K562 (cell line): ENCODE measurements at regions of chr6 and their contacts with region 1.

Region 1: DNA sequence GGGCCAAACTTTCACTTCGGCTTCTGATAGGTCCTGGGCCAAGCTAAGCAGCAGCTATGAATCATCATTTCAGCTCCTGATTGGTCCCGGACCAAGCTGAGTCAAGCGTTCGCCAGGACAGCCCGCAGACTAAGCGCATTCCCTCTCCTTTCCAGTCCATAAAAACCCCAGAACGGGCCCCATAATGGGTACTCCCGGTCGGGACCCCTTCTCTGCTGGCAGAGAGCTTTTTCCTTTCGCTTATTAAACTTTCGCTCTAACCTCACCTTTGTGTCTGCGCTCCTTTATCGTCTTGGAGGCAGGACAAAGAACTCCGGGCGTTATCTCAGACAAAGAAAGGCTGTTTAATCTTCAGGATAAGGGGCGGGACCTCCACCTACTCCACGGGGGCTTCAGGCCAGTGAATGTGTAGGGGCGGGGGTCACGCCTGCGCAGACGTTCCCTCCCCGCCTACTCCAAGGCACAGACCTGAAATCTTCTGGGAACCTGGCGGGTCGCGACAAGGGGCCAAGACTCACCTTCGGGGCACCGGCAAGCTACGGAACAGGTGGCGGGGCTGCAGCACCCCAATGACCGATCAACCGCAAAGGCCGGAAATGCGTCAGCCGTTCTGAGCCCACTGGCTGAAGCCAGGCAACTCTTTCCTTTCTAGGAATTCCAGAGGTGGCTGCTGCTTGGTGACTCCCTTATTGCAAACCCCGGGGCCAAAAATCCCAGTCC is at the start of gene ZSCAN31:
- DNase-seq: peak; percentile 97 to 99 (median 97)
- ATAC-seq: peak; percentile 91
- H3K4me3 ChIP-seq: peak within 1 kb of the TSS; percentile 69
- H3K27ac ChIP-seq: peak within 1 kb of the TSS; percentile 98
- H3K4me1 ChIP-seq: peaks cover 23 to 43% of the 10 kb centered on the region in 2 experiments
- H3K27me3 ChIP-seq: no peaks in the 10 kb centered on the region
- CTCF ChIP-seq: no peak
- EP300 ChIP-seq: peak; percentile 8; the same call in 1 of the 2 replicates
- POLR2A ChIP-seq: peak; percentile 99
- RAD21 ChIP-seq: peak in 1 of 2 experiments; percentile 17; a peak in 1 of 4 replicates
- polyA plus RNA-seq, gene ZSCAN31: 5.0 to 7.0 TPM

Region 2: GRCh38 chr6:28136585-28137504 is 198.9 kb before region 1 on chr6:
- CTCF ChIA-PET with region 1: no interaction called
- POLR2A ChIA-PET with region 1: interaction called, 34 read pairs
- in situ Hi-C with region 1: no loop called
- intact Hi-C with region 1: loop called (anchors 5 kb)
- DNase-seq: peak; percentile 84 to 99 (median 88)
- ATAC-seq: peak; percentile 80
- H3K4me3 ChIP-seq: peak overlapping the region; percentile 72
- H3K27ac ChIP-seq: peak overlapping the region; percentile 96
- H3K4me1 ChIP-seq: peaks cover 12 to 20% of the 10 kb centered on the region in 2 experiments; a peak in 4 of 5 replicates
- H3K27me3 ChIP-seq: no peaks in the 10 kb centered on the region
- CTCF ChIP-seq: no peak
- EP300 ChIP-seq: peak; percentile 91
- POLR2A ChIP-seq: peak; percentile 93
- RAD21 ChIP-seq: peak; percentile 38 to 48; a peak in 3 of 4 replicates

Region 3: GRCh38 chr6:28218271-28219248 is 117.2 kb before region 1 on chr6:
- CTCF ChIA-PET with region 1: no interaction called
- POLR2A ChIA-PET with region 1: interaction called, 38 read pairs
- in situ Hi-C with region 1: no loop called
- intact Hi-C with region 1: loop called (anchors 5 kb)
- DNase-seq: peak; percentile 89 to 95 (median 92)
- ATAC-seq: peak; percentile 84
- H3K4me3 ChIP-seq: peak overlapping the region; percentile 62
- H3K27ac ChIP-seq: peak overlapping the region; percentile 81
- H3K4me1 ChIP-seq: peaks cover 33 to 44% of the 10 kb centered on the region in 2 experiments
- H3K27me3 ChIP-seq: no peaks in the 10 kb centered on the region
- CTCF ChIP-seq: peak in 2 of 3 experiments; percentile 13 to 32; a peak in 1 of 6 replicates
- EP300 ChIP-seq: peak; percentile 36; the same call in 1 of the 2 replicates
- POLR2A ChIP-seq: peak; percentile 82
- RAD21 ChIP-seq: no peak; a peak in 1 of 4 replicates

Region 4: DNA sequence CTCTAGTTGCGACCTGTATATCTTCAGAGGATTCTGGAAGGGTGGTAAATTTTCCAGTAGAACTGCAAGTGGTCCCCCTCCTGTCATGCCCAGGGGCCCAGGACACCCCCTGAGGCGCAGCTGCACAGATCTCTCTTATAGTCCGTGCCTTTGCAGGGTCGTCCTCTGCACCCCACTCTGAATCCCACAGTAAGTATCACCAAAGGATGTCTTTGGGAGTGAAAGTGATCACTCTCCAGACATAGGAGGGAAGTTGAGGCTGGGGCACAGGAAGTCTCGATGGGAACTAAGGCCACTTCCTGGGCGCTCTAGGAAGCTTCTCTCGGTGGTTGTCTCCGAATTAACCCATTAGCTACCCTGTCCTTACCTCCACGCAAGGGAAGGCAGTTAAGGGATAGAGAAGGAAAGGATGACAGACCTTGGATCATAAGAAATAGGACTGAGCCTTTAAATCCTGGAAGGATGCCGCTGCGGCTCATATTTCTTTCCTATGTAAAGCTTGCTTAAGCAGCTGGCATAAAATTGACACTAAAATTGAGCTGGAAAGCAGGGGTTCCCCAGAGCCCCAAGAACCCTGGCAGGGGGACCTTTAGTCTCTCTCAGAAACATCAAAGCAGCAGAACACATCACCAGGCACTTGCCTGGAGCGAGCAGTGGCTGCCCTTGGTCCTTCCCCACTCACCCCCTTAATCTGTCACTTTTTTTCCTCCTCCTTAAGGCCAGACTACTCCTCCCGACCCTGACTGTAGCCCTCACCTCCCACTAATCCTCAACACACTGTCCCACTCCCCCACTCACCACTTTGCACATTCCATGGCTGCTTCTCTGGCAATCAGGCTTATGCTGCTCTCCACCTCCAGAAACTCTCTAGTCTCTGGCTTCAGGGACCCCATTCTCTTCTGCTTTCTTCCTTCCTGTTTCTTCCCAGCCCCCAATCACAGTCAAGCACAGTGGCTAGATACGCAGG is 83.4 kb before region 1 on chr6 and contains the start of gene ZKSCAN4:
- CTCF ChIA-PET with region 1: no interaction called
- POLR2A ChIA-PET with region 1: interaction called, 16 read pairs
- in situ Hi-C with region 1: no loop called
- intact Hi-C with region 1: no loop called
- DNase-seq: peak; percentile 82 to 96 (median 88)
- ATAC-seq: peak; percentile 94
- H3K4me3 ChIP-seq: peak within 1 kb of the TSS; percentile 73
- H3K27ac ChIP-seq: peak within 1 kb of the TSS; percentile 60
- H3K4me1 ChIP-seq: peaks cover 10 to 24% of the 10 kb centered on the region in 2 experiments
- H3K27me3 ChIP-seq: no peaks in the 10 kb centered on the region
- CTCF ChIP-seq: no peak
- EP300 ChIP-seq: peak; percentile 62
- POLR2A ChIP-seq: peak; percentile 75
- RAD21 ChIP-seq: peak; percentile 35 to 38
- polyA plus RNA-seq, gene ZKSCAN4: 1.2 to 1.6 TPM

Region 5: DNA sequence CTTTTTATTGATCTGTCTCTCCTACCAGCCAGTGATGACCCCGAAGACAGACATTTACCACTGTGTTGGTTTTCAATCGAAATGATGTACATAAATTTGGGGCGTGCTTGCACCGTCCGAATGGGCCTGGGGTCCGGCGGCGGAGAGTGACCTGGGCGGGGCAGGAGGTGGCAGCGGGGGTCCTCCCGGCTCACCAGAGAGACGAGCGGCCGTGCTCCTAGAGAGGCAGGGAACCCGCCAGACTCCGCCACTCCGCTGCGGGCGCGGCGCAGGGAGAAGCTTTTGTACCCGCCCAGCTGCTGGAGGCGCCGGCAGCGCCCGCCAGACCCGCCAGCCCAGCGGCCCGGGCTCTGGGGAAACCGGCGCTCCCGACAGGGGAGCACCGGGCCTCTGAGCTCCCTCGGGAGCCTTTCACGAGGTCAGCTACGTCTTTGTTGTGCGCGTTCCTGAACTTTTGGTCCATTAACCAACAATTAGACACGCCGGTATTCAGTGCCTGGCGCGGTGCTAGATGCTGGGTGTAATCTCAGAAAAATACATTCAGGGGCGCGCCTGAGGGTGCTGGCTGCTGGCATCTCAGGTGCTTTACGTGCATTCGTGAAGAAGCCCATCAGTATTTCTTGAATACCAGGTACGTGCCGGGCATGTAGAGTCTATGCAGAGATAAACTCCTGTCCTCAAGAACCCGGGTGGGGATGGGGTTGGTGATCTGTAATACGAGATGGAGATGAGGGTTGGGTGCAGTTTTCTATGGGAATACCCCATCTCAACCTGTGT is 54.2 kb before region 1 on chr6 and contains the start of gene PGBD1:
- CTCF ChIA-PET with region 1: no interaction called
- POLR2A ChIA-PET with region 1: interaction called, 6 read pairs
- in situ Hi-C with region 1: no loop called
- intact Hi-C with region 1: loop called (anchors 5 kb)
- DNase-seq: peak; percentile 76 to 92 (median 86)
- ATAC-seq: peak; percentile 97
- H3K4me3 ChIP-seq: peak within 1 kb of the TSS; percentile 73
- H3K27ac ChIP-seq: peak within 1 kb of the TSS; percentile 48
- H3K4me1 ChIP-seq: peaks cover 4 to 7% of the 10 kb centered on the region in 2 experiments; a peak in 2 of 5 replicates
- H3K27me3 ChIP-seq: no peaks in the 10 kb centered on the region
- CTCF ChIP-seq: no peak; a peak in 1 of 6 replicates
- EP300 ChIP-seq: no peak
- POLR2A ChIP-seq: peak; percentile 82
- RAD21 ChIP-seq: peak; percentile 28 to 35
- polyA plus RNA-seq, gene PGBD1: 3.3 to 3.5 TPM

Region 6: GRCh38 chr6:28322661-28323060 is 13.1 kb before region 1 on chr6:
- CTCF ChIA-PET with region 1: no interaction called
- POLR2A ChIA-PET with region 1: interaction called, 53 read pairs
- in situ Hi-C with region 1: no loop called
- intact Hi-C with region 1: no loop called
- DNase-seq: no peak
- ATAC-seq: no peak
- H3K4me3 ChIP-seq: no peak overlapping the region
- H3K27ac ChIP-seq: no peak overlapping the region
- H3K4me1 ChIP-seq: no peaks in the 10 kb centered on the region
- H3K27me3 ChIP-seq: no peaks in the 10 kb centered on the region
- CTCF ChIP-seq: no peak
- EP300 ChIP-seq: no peak
- POLR2A ChIP-seq: no peak
- RAD21 ChIP-seq: no peak

Region 7: GRCh38 chr6:28355743-28356665 is 20.3 kb after region 1 on chr6:
- CTCF ChIA-PET with region 1: no interaction called
- POLR2A ChIA-PET with region 1: interaction called, 80 read pairs
- in situ Hi-C with region 1: no loop called
- intact Hi-C with region 1: loop called (anchors 1 kb)
- DNase-seq: peak; percentile 73 to 94 (median 75)
- ATAC-seq: peak; percentile 80
- H3K4me3 ChIP-seq: peak overlapping the region; percentile 42
- H3K27ac ChIP-seq: peak overlapping the region; percentile 76
- H3K4me1 ChIP-seq: peaks cover 44 to 49% of the 10 kb centered on the region in 2 experiments
- H3K27me3 ChIP-seq: no peaks in the 10 kb centered on the region; a peak in 1 of 5 replicates
- CTCF ChIP-seq: peak; percentile 79 to 95 (median 84)
- EP300 ChIP-seq: peak; percentile 57; the same call in 1 of the 2 replicates
- POLR2A ChIP-seq: no peak
- RAD21 ChIP-seq: peak; percentile 91 to 94

Region 8: GRCh38 chr6:28569748-28570147 is 234.0 kb after region 1 on chr6:
- CTCF ChIA-PET with region 1: no interaction called
- POLR2A ChIA-PET with region 1: no interaction called
- in situ Hi-C with region 1: no loop called
- intact Hi-C with region 1: no loop called
- DNase-seq: no peak
- ATAC-seq: no peak
- H3K4me3 ChIP-seq: no peak overlapping the region
- H3K27ac ChIP-seq: no peak overlapping the region
- H3K4me1 ChIP-seq: peaks cover 4 to 28% of the 10 kb centered on the region in 2 experiments; a peak in 3 of 5 replicates
- H3K27me3 ChIP-seq: no peaks in the 10 kb centered on the region
- CTCF ChIP-seq: no peak
- EP300 ChIP-seq: no peak
- POLR2A ChIP-seq: no peak
- RAD21 ChIP-seq: no peak